Endothelial cell of umbilical vein (primary cell): ENCODE measurements at regions of chr19 and their contacts with region 1.

Region 1: DNA sequence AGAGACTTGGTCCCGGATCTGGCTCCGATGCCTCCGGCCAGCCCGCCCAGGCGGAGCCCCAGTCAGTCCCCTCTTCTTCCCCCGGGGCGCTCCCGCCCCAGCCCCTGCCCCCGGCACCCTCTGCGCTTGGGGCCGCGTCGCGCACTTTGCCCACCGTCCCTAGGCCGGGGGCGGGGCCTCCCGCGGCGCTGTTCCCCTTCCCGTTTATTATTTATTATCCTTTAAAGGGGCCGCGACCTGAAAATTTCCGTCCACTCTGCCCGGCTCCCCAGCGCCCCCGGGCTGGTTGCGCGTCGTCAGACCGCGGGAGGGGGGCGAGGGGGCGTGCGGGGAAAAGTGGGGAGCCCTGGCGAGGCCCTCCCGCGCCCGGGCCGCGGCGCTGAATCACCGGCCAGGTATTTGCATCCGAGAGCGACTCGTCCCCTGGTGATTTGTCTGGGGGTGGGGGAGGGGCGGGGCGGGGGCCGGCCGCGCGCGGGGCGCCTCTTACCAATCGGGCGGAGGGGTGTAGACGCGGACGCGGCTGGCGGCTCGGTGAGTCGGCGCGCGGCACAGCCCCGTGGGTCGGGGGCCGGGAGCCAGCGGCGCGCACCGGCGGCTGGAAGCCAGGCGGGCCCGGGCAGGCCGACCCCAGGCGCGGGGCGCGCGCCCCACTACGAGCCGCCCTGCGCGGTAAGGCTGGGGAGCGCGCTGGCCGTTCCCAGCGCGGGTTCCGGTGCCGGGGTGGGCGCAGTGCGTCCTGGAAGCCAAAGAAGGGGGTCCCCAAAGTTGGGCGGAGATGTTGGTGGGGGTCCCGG is at the start of gene ARID3A:
- DNase-seq: peak; percentile 79
- H3K4me3 ChIP-seq: peak within 1 kb of the TSS; percentile 69 to 95 (median 85)
- H3K27ac ChIP-seq: peak within 1 kb of the TSS; percentile 86
- H3K4me1 ChIP-seq: peaks cover 6% of the 10 kb centered on the region
- H3K27me3 ChIP-seq: peaks cover 1% of the 10 kb centered on the region in 2 experiments
- CTCF ChIP-seq: no peak
- POLR2A ChIP-seq: no peak
- total RNA-seq, gene ARID3A: 10.8 and 13.2 TPM in 2 replicates

Region 2: GRCh38 chr19:984165-984967 is 58.6 kb after region 1 on chr19 and contains the start of gene WDR18:
- CTCF ChIA-PET with region 1: interaction called, 46 read pairs
- POLR2A ChIA-PET with region 1: interaction called, 4 read pairs
- dilution Hi-C with region 1: no loop called
- intact Hi-C with region 1: loop called (anchors 1 kb)
- DNase-seq: peak; percentile 85
- H3K4me3 ChIP-seq: peak within 1 kb of the TSS; percentile 79 to 95 (median 83)
- H3K27ac ChIP-seq: peak within 1 kb of the TSS; percentile 79
- H3K4me1 ChIP-seq: peaks cover 11% of the 10 kb centered on the region
- H3K27me3 ChIP-seq: no peaks in the 10 kb centered on the region
- CTCF ChIP-seq: peak in 1 of 2 donors; percentile 19
- POLR2A ChIP-seq: peak; percentile 67
- total RNA-seq, gene WDR18: 54.8 and 74.7 TPM in 2 replicates

Region 3: DNA sequence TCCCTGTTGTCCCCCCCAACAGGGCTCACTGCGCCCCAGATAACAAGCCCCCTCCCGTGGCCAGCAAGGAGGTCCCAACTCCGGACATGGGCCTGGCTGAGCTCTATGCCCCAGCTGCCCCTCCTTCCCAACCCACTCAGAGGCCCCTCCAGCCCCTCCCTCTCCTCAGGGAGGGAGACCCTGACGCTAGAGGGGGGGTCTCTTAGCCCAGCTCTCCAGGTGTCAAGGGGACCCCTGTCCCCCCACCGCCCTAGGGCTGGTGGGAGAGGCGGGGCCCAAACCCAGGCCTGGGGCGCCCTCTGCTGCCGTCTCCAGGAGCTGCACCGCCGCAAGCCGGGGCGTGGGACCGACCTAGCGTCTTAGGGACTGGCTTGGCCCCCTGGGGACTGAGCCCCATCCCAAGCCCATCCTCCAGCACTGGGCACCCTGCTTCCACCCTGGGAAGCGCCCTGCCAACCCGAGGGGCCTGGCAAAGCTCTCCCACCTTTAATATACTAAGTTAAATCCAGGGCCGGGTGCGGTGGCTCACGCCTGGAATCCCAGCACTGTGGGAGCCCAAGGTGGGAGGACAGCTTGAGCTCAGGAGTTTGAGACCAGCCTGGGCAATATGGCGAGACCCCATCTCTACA is 75.9 kb after region 1 on chr19:
- CTCF ChIA-PET with region 1: interaction called, 3 read pairs
- POLR2A ChIA-PET with region 1: no interaction called
- dilution Hi-C with region 1: no loop called
- intact Hi-C with region 1: loop called (anchors 1 kb)
- DNase-seq: peak; percentile 37
- H3K4me3 ChIP-seq: no peak overlapping the region
- H3K27ac ChIP-seq: no peak overlapping the region
- H3K4me1 ChIP-seq: no peaks in the 10 kb centered on the region
- H3K27me3 ChIP-seq: peaks cover 17 to 19% of the 10 kb centered on the region in 2 experiments
- CTCF ChIP-seq: peak; percentile 84 to 89
- POLR2A ChIP-seq: no peak